Colonic mucosa (tissue), 4 donors: ENCODE measurements at regions of chr14 and their contacts with region 1.

Region 1: GRCh38 chr14:71320107-71320733 is 413.0 kb downstream of the PCNX1 start:
- DNase-seq: peak; percentile 98
- H3K4me3 ChIP-seq: peak within 1 kb of the TSS; percentile 60
- H3K27ac ChIP-seq: peak within 1 kb of the TSS; percentile 97
- H3K4me1 ChIP-seq: no peaks in the 10 kb centered on the region
- H3K27me3 ChIP-seq: no peaks in the 10 kb centered on the region
- CTCF ChIP-seq: no peak

Region 2: GRCh38 chr14:71060825-71061455 is 259.3 kb before region 1 on chr14:
- intact Hi-C with region 1: no loop called
- DNase-seq: no peak
- H3K4me3 ChIP-seq: no peak overlapping the region
- H3K27ac ChIP-seq: no peak overlapping the region
- H3K4me1 ChIP-seq: no peaks in the 10 kb centered on the region
- H3K27me3 ChIP-seq: no peaks in the 10 kb centered on the region
- CTCF ChIP-seq: no peak

Region 3: GRCh38 chr14:71138448-71139293 is 181.5 kb before region 1 on chr14:
- intact Hi-C with region 1: loop called (anchors 10 kb)
- DNase-seq: peak; percentile 60
- H3K4me3 ChIP-seq: no peak overlapping the region
- H3K27ac ChIP-seq: no peak overlapping the region
- H3K4me1 ChIP-seq: no peaks in the 10 kb centered on the region
- H3K27me3 ChIP-seq: no peaks in the 10 kb centered on the region
- CTCF ChIP-seq: peak; percentile 93

Region 4: GRCh38 chr14:71235875-71236274 is 84.3 kb before region 1 on chr14:
- intact Hi-C with region 1: no loop called
- DNase-seq: no peak
- H3K4me3 ChIP-seq: no peak overlapping the region
- H3K27ac ChIP-seq: no peak overlapping the region
- H3K4me1 ChIP-seq: no peaks in the 10 kb centered on the region
- H3K27me3 ChIP-seq: no peaks in the 10 kb centered on the region
- CTCF ChIP-seq: no peak

Region 5: DNA sequence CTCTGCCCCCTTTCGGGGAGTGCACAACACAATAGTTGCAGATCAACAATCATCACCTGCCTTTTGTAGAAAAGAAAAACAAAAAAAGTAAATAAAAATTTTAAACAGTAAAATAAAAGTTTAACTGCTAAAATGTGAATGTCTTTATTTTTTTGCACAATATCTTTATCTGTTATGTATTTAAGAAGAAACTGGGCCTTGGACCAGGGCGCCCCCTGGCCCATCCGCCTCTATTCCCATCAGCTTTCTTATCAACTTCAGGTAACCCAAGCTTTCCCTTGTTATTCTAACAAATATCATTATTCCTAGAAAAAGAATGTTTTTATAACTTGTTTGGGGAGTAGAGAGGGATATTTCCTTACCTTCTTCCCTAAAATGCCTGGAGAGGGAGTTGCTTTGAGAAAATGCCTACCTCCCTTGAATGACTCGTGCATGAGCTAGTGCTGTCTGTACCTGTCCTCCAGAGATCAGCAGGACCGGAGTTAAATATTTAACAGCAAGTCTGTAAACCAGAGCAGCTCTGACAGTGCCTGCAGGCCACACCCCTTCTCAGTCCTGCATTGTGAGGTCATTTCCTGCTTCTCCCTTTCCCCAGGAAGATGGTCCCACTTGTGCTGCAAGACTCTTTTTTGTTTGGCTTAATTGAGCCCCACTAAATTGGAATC is 419.2 kb after region 1 on chr14:
- intact Hi-C with region 1: loop called (anchors 5 kb)
- DNase-seq: peak; percentile 63
- H3K4me3 ChIP-seq: no peak overlapping the region
- H3K27ac ChIP-seq: no peak overlapping the region
- H3K4me1 ChIP-seq: no peaks in the 10 kb centered on the region
- H3K27me3 ChIP-seq: no peaks in the 10 kb centered on the region
- CTCF ChIP-seq: no peak

Region 6: GRCh38 chr14:71753126-71753830 is 433.1 kb after region 1 on chr14:
- intact Hi-C with region 1: loop called (anchors 5 kb)
- DNase-seq: peak; percentile 92
- H3K4me3 ChIP-seq: no peak overlapping the region
- H3K27ac ChIP-seq: no peak overlapping the region
- H3K4me1 ChIP-seq: no peaks in the 10 kb centered on the region
- H3K27me3 ChIP-seq: no peaks in the 10 kb centered on the region
- CTCF ChIP-seq: peak; percentile 82